ENCODE measurements at regions of chr10 and their contacts with region 1.

Region 1: DNA sequence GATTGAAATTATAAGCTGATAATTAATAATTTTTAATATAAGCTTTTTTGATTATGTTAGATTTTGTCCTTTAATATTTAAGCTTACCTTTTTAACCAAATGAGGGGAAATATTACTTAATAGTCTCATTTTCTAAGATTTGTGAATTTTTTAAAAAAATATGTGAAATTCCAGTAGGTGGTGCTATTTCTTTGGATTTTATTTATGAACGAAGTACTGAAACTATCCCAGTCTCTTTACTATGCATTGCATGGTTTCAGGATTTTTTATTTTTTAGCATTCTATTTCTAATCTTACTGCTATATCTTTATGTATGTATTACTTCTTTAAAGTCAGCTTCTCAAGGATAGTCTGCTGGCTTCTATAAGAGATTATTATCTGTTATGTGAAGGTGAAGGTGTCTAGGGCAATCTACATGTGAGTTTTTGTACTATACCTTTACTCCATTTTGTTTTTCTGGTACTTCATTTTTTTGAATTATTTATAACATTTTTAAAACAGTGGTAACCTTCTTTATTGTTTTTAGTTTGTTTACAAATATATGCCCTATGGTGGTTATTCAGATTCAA is 78.3 kb downstream of the ATRNL1 start:
- DNase-seq: no peak
- ATAC-seq: peak; percentile 27; the same call in 2 of the 3 replicates
- H3K4me3 ChIP-seq: no peak overlapping the region
- H3K27ac ChIP-seq: no peak overlapping the region
- H3K4me1 ChIP-seq: no peaks in the 10 kb centered on the region
- H3K27me3 ChIP-seq: no peaks in the 10 kb centered on the region
- CTCF ChIP-seq: peak in 1 of 3 experiments; percentile 14; a peak in 2 of 6 replicates
- EP300 ChIP-seq: no peak
- POLR2A ChIP-seq: no peak
- RAD21 ChIP-seq: no peak

Region 2: DNA sequence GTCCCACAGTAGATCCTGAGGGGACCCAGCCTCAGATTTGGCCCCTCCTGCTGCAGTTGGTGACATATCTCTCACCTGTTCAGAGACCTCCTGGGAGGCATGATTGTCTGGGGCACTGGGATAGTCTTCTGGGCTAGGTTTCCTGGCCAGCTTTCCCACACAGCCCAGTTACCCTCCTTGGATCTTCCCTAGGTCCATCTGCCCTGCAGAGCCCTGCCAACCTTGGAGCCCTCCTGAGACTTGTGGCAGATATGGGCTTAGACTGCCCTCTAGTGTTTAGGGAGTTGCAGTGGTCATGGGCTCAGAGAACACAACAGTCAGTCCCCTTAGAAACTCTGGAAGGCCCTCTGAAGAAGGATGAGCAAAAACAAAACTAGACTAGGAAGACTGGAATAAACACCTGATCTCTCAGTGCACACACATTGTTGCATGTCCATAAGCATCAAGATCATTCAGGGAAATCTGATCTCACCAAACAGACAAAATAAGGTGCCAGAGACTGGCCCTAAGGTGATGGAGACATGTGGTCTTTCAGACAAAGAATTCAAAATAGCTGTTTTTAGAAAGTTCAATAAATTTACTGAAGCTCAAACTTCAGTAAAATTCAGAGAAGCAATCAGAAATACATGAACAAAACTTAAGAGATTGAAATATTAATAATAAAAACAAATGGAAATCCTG is 246.2 kb after region 1 on chr10:
- CTCF ChIA-PET with region 1: interaction called, 10 read pairs
- POLR2A ChIA-PET with region 1: no interaction called
- RAD21 ChIA-PET with region 1: no interaction called
- SMC1A ChIA-PET with region 1: interaction called, 3 read pairs
- in situ Hi-C with region 1: no loop called
- intact Hi-C with region 1: loop called (anchors 2 kb)
- DNase-seq: peak; percentile 4
- ATAC-seq: peak; percentile 99
- H3K4me3 ChIP-seq: no peak overlapping the region
- H3K27ac ChIP-seq: no peak overlapping the region
- H3K4me1 ChIP-seq: no peaks in the 10 kb centered on the region
- H3K27me3 ChIP-seq: no peaks in the 10 kb centered on the region
- CTCF ChIP-seq: peak; percentile 71 to 79 (median 78)
- EP300 ChIP-seq: no peak
- POLR2A ChIP-seq: no peak
- RAD21 ChIP-seq: peak; percentile 89